Mammary epithelial cell (primary cell): ENCODE measurements at regions of chr3 and their contacts with region 1.

Region 1: DNA sequence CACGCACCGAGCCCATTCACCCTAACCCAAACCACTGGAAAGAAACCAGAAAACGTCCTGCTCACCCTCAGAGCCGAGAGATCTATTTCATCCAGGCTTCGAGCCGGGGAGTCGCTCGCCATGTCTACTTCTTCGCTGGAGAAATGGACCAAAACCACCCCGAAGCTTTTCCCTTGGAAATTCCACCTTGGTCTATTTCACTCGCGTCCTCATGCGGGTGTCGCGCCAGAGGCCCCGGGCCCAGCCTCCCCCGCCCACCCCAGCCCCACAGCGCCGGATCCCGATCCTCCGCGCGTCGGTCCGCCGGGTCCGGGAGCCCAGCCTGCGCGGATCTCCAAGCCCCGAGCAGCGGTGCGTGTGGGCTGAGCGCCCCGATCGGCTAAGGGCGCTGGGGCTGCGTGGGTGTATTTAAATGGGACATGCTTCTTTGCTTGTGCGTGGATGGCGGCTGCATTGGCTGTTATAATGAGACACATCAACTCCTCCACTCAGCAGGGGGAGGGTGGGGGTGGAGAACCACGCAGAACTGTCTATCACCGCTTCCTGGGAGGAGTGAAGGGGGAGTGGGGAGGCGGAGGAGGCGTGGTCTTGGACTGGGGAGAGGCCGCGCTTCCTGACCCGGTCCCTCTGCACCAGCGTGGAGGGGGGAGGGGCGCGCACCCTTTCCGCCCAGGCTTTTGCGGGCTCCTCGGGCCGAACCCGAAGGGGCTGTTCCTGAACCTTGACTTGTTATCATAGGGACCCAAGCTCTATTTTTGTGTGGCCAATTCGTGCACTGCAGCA is at the start of gene TNIK:
- DNase-seq: peak; percentile 90
- H3K4me3 ChIP-seq: peak within 1 kb of the TSS; percentile 82 to 87 (median 86)
- H3K27ac ChIP-seq: peak within 1 kb of the TSS; percentile 60
- H3K4me1 ChIP-seq: peaks cover 10% of the 10 kb centered on the region
- H3K27me3 ChIP-seq: no peaks in the 10 kb centered on the region
- CTCF ChIP-seq: peak; percentile 5 to 8
- total RNA-seq, gene TNIK: 7.5 to 9.7 TPM

Region 2: DNA sequence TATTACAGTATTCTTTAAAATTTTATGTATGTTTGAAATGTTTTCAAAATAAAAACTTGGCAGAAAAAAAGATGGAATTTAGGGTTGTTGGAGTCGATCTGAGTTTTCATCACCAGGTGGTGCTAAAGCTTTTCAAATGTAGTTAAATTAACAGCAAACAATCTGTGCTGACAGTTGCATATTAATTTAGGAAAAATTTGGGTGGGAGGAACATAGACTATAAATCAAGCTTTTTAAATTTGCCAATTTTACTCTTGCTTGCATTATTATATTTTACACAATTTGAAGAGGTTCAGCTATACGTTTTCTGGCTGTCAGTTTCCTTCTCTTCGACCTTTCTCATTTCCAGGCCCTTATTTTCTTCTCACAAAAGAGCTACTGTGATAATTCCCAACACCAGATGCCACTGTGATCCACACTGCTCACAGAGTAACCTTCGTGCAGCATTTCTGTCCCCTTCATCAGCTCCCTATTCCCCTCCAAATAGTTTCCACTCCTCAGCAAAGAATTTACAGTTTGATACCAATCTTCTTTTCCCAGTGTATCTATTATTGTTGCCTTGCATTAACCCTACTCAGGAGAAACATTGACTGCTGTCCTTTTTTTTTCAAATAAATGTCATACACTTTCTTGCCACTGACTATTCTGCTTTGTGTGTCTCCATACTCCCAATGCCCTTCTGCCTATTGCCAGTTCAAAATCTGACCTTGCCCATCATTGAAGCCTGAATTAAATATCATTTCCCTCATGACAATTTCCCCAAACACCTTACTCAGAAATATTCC is 498.3 kb before region 1 on chr3:
- CTCF ChIA-PET with region 1: no interaction called
- dilution Hi-C with region 1: no loop called
- in situ Hi-C with region 1: no loop called
- intact Hi-C with region 1: loop called (anchors 5 kb)
- DNase-seq: peak; percentile 12
- H3K4me3 ChIP-seq: no peak overlapping the region
- H3K27ac ChIP-seq: no peak overlapping the region
- H3K4me1 ChIP-seq: no peaks in the 10 kb centered on the region
- H3K27me3 ChIP-seq: no peaks in the 10 kb centered on the region
- CTCF ChIP-seq: peak; percentile 49 to 58

Region 3: GRCh38 chr3:171187706-171188290 is 272.3 kb before region 1 on chr3:
- CTCF ChIA-PET with region 1: interaction called, 4 read pairs
- dilution Hi-C with region 1: no loop called
- in situ Hi-C with region 1: loop called in 1 of 2 experiments (anchors 10 kb)
- intact Hi-C with region 1: loop called (anchors 1 kb)
- DNase-seq: no peak
- H3K4me3 ChIP-seq: no peak overlapping the region
- H3K27ac ChIP-seq: no peak overlapping the region
- H3K4me1 ChIP-seq: no peaks in the 10 kb centered on the region
- H3K27me3 ChIP-seq: no peaks in the 10 kb centered on the region
- CTCF ChIP-seq: peak; percentile 53 to 78

Region 4: GRCh38 chr3:171284308-171285075 is 175.6 kb before region 1 on chr3:
- CTCF ChIA-PET with region 1: no interaction called
- dilution Hi-C with region 1: no loop called
- in situ Hi-C with region 1: no loop called
- intact Hi-C with region 1: loop called (anchors 2 kb)
- DNase-seq: peak; percentile 92
- H3K4me3 ChIP-seq: peak overlapping the region in 1 of 3 experiments; percentile 13
- H3K27ac ChIP-seq: peak overlapping the region; percentile 82
- H3K4me1 ChIP-seq: peaks cover 37% of the 10 kb centered on the region
- H3K27me3 ChIP-seq: no peaks in the 10 kb centered on the region
- CTCF ChIP-seq: no peak

Region 5: DNA sequence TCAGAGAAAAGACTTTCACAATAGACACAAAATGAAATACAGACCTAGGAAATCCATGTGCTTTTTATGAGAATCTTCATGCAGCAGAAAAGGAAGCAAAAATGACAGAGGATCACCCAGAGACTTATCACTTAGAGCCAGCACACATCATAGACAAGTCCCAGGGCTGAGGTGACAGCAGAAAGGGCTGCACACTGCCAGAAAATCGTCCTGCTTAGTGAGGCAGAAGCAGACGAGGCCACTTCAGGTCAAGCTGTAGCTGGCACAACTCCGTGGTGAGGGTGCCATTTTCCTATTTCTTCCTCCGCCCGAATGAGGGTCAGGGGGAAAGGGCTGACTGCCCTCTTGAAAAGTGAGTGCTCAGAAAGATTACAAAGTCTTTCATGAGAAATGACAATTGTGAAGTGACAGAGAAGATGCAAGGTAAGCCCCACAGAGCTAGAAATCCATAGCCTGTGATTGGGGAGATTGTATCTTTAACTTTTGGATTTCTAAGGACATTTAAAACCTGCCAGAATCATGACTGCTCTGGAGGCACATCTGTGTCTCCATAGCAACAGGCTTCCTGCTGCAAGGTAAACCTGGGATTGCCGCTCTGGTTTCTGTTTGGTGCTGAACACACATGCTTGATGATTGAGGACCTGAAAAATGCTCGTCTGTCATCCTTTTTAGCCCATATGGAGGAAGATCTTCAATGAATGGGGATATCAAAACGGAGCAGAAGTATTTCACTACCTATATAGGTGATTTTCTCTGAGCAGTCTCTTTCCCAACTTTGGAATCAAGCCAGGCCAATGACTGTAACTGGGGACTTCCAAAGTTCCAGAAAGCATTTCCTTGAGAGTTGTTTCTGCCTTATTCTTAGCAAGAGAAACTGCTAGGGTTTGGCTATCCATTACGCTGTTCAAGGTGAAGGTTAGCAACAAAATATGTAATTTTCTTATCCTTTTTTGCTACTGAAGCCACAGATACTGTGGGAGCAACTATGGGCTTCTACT is 96.3 kb after region 1 on chr3:
- CTCF ChIA-PET with region 1: no interaction called
- dilution Hi-C with region 1: no loop called
- in situ Hi-C with region 1: no loop called
- intact Hi-C with region 1: loop called (anchors 5 kb)
- DNase-seq: peak; percentile 81
- H3K4me3 ChIP-seq: peak overlapping the region in 1 of 3 experiments; percentile 15
- H3K27ac ChIP-seq: peak overlapping the region; percentile 11
- H3K4me1 ChIP-seq: peaks cover 6% of the 10 kb centered on the region
- H3K27me3 ChIP-seq: no peaks in the 10 kb centered on the region
- CTCF ChIP-seq: no peak